ENCODE measurements at regions of chr15 and their contacts with region 1.

Region 1: GRCh38 chr15:36469311-36469966 is 110.0 kb upstream of the CDIN1 start:
- DNase-seq: no peak
- ATAC-seq: no peak
- H3K4me3 ChIP-seq: no peak overlapping the region
- H3K27ac ChIP-seq: no peak overlapping the region
- H3K4me1 ChIP-seq: no peaks in the 10 kb centered on the region
- H3K27me3 ChIP-seq: no peaks in the 10 kb centered on the region
- CTCF ChIP-seq: no peak

Region 2: GRCh38 chr15:36208868-36209582 is 260.4 kb before region 1 on chr15:
- CTCF ChIA-PET with region 1: no interaction called
- POLR2A ChIA-PET with region 1: no interaction called
- intact Hi-C with region 1: no loop called
- DNase-seq: no peak
- ATAC-seq: no peak
- H3K4me3 ChIP-seq: no peak overlapping the region
- H3K27ac ChIP-seq: no peak overlapping the region
- H3K4me1 ChIP-seq: peaks cover 13% of the 10 kb centered on the region
- H3K27me3 ChIP-seq: no peaks in the 10 kb centered on the region
- CTCF ChIP-seq: peak; percentile 46; the same call in 1 of the 2 replicates

Region 3: DNA sequence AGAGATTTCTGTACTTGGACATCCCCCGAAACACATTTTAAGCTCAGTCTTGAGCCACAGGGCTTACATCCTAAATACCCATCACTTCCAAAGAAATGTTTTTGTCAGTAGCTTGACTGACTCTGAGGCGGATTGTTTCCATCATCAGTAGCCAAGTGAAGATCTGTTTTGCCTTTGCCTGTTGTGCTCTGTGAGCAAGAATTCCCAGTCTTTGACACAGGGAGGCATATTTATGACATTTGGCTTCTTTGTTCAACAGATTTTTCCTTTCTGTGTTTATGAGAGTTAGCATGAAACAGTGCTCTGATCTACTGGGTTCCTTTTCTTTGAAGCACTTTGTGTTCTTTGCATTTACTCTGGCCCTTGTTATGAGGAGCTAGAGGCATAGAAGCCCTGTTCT is 22.1 kb before region 1 on chr15:
- CTCF ChIA-PET with region 1: no interaction called
- POLR2A ChIA-PET with region 1: no interaction called
- intact Hi-C with region 1: loop called (anchors 1 kb)
- DNase-seq: no peak
- ATAC-seq: no peak
- H3K4me3 ChIP-seq: no peak overlapping the region
- H3K27ac ChIP-seq: no peak overlapping the region
- H3K4me1 ChIP-seq: no peaks in the 10 kb centered on the region
- H3K27me3 ChIP-seq: no peaks in the 10 kb centered on the region
- CTCF ChIP-seq: no peak